Natural killer cell (primary cell): ENCODE measurements at regions of chr10 and their contacts with region 1.

Region 1: DNA sequence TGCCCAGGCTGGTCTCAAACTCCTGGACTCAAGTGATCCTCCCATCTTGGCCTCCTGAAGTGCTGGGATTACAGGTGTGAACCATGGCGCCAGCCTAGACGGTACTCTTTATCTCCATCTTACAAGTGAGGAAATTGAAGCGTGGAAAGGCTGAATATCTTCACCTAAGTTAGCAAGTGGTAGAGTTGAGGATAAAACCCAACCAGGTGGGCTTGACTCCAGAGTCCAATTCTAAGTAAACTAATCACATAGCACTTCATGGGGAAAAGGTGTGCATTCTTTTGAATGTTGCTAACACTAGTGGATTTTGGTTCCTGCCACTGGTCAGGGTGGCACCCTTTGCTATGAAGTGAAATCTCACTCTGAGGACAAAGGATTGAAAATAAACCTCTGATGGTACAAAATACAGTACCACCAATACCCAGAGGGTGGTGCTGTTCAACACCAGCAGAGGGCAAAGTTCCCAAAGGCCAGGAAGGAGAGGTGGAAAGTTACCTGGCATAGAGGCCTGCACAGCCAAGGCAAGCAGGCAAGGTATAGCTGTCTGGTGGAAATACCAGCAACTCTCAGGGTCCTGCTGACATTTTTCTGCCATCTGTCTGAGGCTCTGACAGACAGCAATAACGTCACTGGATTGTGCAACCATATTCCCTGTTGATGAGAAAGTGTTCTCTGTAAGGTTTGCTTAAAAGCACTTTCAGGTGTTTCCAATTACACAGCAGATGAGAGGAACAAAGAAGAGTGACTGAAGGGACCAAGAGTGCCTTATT is 17.6 kb downstream of the ZDHHC16 start:
- DNase-seq: peak in 1 of 2 donors; percentile 74
- ATAC-seq: peak; percentile 68 to 76 (median 69)
- H3K4me3 ChIP-seq: no peak overlapping the region
- H3K4me3 Mint-ChIP-seq: no peak overlapping the region
- H3K27ac ChIP-seq: no peak overlapping the region
- H3K27ac Mint-ChIP-seq: peak overlapping the region in 1 of 2 donors; percentile 42
- H3K4me1 ChIP-seq: no peaks in the 10 kb centered on the region
- H3K4me1 Mint-ChIP-seq: no peaks in the 10 kb centered on the region
- H3K27me3 ChIP-seq: no peaks in the 10 kb centered on the region
- H3K27me3 Mint-ChIP-seq: no peaks in the 10 kb centered on the region
- CTCF ChIP-seq: peak; percentile 82

Region 2: GRCh38 chr10:97553575-97554031 is 90.1 kb after region 1 on chr10:
- intact Hi-C with region 1: loop called (anchors 1 kb)
- DNase-seq: peak; percentile 42 to 74
- ATAC-seq: peak; percentile 67 to 99 (median 88)
- H3K4me3 ChIP-seq: no peak overlapping the region
- H3K4me3 Mint-ChIP-seq: no peak overlapping the region
- H3K27ac ChIP-seq: no peak overlapping the region
- H3K27ac Mint-ChIP-seq: no peak overlapping the region
- H3K4me1 ChIP-seq: no peaks in the 10 kb centered on the region
- H3K4me1 Mint-ChIP-seq: peaks cover 0 to 4% of the 10 kb centered on the region in 2 donors
- H3K27me3 ChIP-seq: no peaks in the 10 kb centered on the region
- H3K27me3 Mint-ChIP-seq: no peaks in the 10 kb centered on the region
- CTCF ChIP-seq: peak; percentile 68